T-cell (primary cell): ENCODE measurements at regions of chr13 and their contacts with region 1.

Region 1: DNA sequence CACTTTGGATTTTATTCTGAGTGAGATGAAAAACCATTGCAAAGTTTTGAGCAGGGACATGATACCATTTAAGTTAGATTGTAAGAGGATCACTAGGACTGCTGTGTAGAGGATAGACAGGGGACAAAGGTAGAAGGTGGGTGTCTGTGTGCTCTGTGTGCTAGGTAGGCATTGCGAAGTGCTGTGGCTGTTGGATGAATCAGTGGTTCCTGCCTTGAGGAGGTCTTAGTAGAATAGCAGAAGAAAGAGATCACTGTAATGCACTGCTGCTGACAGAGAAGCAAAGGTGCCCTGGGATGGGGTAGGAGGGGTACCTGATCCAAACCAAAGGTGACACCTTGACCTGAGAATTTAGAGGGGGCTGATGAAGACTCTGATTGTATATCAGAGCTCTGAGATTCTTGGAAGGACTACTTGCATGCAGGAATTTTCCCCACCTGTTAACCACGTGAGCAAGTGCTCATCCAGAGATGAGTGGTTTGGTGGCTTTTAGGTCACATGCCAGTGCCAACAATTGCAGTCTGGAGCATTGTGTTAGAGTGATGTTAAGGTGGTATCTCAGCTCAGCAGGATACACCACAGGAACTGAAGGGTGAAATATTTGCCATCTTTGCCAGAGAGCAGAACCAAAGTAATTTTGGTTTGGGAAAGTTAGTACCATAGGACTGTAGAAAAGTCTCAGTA is 10.8 kb downstream of the WASF3 start:
- DNase-seq: no peak
- ATAC-seq: no peak
- H3K4me3 ChIP-seq: no peak overlapping the region
- H3K4me3 Mint-ChIP-seq: no peak overlapping the region
- H3K27ac ChIP-seq: no peak overlapping the region
- H3K27ac Mint-ChIP-seq: no peak overlapping the region
- H3K4me1 ChIP-seq: no peaks in the 10 kb centered on the region
- H3K4me1 Mint-ChIP-seq: no peaks in the 10 kb centered on the region
- H3K27me3 ChIP-seq: no peaks in the 10 kb centered on the region
- H3K27me3 Mint-ChIP-seq: peaks cover 21 to 24% of the 10 kb centered on the region in 2 donors

Region 2: DNA sequence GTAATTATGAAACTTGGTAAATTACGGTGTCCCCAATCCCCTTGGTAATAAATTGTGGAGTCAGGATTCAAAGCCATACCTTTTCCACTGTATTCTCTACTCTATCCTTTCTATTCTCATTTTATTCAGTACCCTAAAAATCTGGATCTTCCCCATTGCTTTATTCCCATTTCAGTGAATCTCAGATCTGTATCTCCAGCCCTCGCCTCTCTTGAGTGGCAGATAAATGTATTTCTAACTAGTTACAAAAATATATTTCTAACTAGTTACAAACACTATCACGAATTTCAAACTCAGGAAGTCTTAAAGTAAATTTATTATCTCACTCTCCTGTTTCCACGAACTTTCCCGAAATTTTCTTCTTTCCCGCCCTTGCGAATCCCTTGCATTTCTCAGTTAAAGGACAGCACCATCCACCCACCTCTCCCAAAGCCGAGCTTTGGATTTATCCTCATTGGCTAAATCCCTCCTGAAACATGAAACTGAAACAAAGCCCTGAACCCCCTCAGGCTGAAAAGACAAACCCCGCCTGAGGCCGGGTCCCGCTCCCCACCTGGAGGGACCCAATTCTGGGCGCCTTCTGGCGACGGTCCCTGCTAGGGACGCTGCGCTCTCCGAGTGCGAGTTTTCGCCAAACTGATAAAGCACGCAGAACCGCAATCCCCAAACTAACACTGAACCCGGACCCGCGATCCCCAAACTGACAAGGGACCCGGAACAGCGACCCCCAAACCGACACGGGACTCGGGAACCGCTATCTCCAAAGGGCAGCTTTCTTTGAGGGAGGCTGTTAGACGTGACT is 1636.6 kb before region 1 on chr13:
- CTCF ChIA-PET with region 1: interaction called in 1 of 2 experiments, 10 read pairs
- POLR2A ChIA-PET with region 1: no interaction called
- DNase-seq: no peak
- ATAC-seq: no peak
- H3K4me3 ChIP-seq: no peak overlapping the region
- H3K4me3 Mint-ChIP-seq: no peak overlapping the region
- H3K27ac ChIP-seq: no peak overlapping the region
- H3K27ac Mint-ChIP-seq: no peak overlapping the region
- H3K4me1 ChIP-seq: peaks cover 0 to 4% of the 10 kb centered on the region in 2 experiments
- H3K4me1 Mint-ChIP-seq: no peaks in the 10 kb centered on the region
- H3K27me3 ChIP-seq: peaks cover 9 to 21% of the 10 kb centered on the region in 2 experiments
- H3K27me3 Mint-ChIP-seq: peaks cover 44 to 47% of the 10 kb centered on the region in 2 donors

Region 3: GRCh38 chr13:26401578-26402021 is 166.7 kb before region 1 on chr13:
- CTCF ChIA-PET with region 1: no interaction called
- POLR2A ChIA-PET with region 1: no interaction called
- DNase-seq: no peak
- ATAC-seq: no peak
- H3K4me3 ChIP-seq: no peak overlapping the region
- H3K4me3 Mint-ChIP-seq: no peak overlapping the region
- H3K27ac ChIP-seq: no peak overlapping the region
- H3K27ac Mint-ChIP-seq: no peak overlapping the region
- H3K4me1 ChIP-seq: no peaks in the 10 kb centered on the region
- H3K4me1 Mint-ChIP-seq: no peaks in the 10 kb centered on the region
- H3K27me3 ChIP-seq: no peaks in the 10 kb centered on the region
- H3K27me3 Mint-ChIP-seq: no peaks in the 10 kb centered on the region